ENCODE measurements at regions of chr6 and their contacts with region 1.

Region 1: GRCh38 chr6:159761873-159762680 is at the start of gene ACAT2:
- DNase-seq: peak; percentile 91 to 95 (median 91)
- H3K4me3 ChIP-seq: peak within 1 kb of the TSS; percentile 96
- H3K4me3 Mint-ChIP-seq: peak within 1 kb of the TSS; percentile 92 to 99 (median 96)
- H3K27ac ChIP-seq: peak within 1 kb of the TSS; percentile 99
- H3K27ac Mint-ChIP-seq: peak within 1 kb of the TSS; percentile 74 to 99 (median 98)
- H3K4me1 ChIP-seq: peaks cover 17% of the 10 kb centered on the region
- H3K4me1 Mint-ChIP-seq: peaks cover 22 to 36% (median 27%) of the 10 kb centered on the region in 3 donors
- H3K27me3 ChIP-seq: no peaks in the 10 kb centered on the region
- H3K27me3 Mint-ChIP-seq: no peaks in the 10 kb centered on the region
- total RNA-seq, gene ACAT2: 68.8 to 69.7 TPM

Region 2: GRCh38 chr6:159726918-159727716 is 35.0 kb before region 1 on chr6 and contains the start of gene WTAP:
- CTCF ChIA-PET with region 1: no interaction called
- POLR2A ChIA-PET with region 1: interaction called, 38 read pairs
- DNase-seq: peak; percentile 95 to 98 (median 96)
- H3K4me3 ChIP-seq: peak within 1 kb of the TSS; percentile 92
- H3K4me3 Mint-ChIP-seq: peak within 1 kb of the TSS; percentile 91 to 99 (median 94)
- H3K27ac ChIP-seq: peak within 1 kb of the TSS; percentile 98
- H3K27ac Mint-ChIP-seq: peak within 1 kb of the TSS; percentile 97 to 100 (median 99)
- H3K4me1 ChIP-seq: peaks cover 35% of the 10 kb centered on the region
- H3K4me1 Mint-ChIP-seq: peaks cover 54 to 75% (median 63%) of the 10 kb centered on the region in 3 donors
- H3K27me3 ChIP-seq: no peaks in the 10 kb centered on the region
- H3K27me3 Mint-ChIP-seq: peaks cover 0 to 6% of the 10 kb centered on the region in 2 donors
- total RNA-seq, gene WTAP: 95.1 to 103 TPM

Region 3: GRCh38 chr6:159789377-159790148 is 27.5 kb after region 1 on chr6 and contains the start of gene TCP1:
- CTCF ChIA-PET with region 1: interaction called, 4 read pairs
- POLR2A ChIA-PET with region 1: interaction called, 76 read pairs
- DNase-seq: peak; percentile 98 to 99 (median 99)
- H3K4me3 ChIP-seq: peak within 1 kb of the TSS; percentile 97
- H3K4me3 Mint-ChIP-seq: peak within 1 kb of the TSS; percentile 93 to 100 (median 98)
- H3K27ac ChIP-seq: peak within 1 kb of the TSS; percentile 95
- H3K27ac Mint-ChIP-seq: peak within 1 kb of the TSS; percentile 94 to 99 (median 98)
- H3K4me1 ChIP-seq: peaks cover 50% of the 10 kb centered on the region
- H3K4me1 Mint-ChIP-seq: peaks cover 57 to 77% (median 68%) of the 10 kb centered on the region in 3 donors
- H3K27me3 ChIP-seq: no peaks in the 10 kb centered on the region
- H3K27me3 Mint-ChIP-seq: peaks cover 0 to 3% of the 10 kb centered on the region in 2 donors
- total RNA-seq, gene TCP1: 589 to 617 TPM

Measured in CD8-positive, alpha-beta memory T cell (primary cell).